Natural killer cell (primary cell): ENCODE measurements at regions of chr5 and their contacts with region 1.

Region 1: GRCh38 chr5:160439205-160439600 is 17.5 kb downstream of the PTTG1 start:
- DNase-seq: peak; percentile 89 to 94
- ATAC-seq: peak; percentile 85 to 91 (median 87)
- H3K4me3 ChIP-seq: peak overlapping the region; percentile 55
- H3K4me3 Mint-ChIP-seq: peak overlapping the region; percentile 92
- H3K27ac ChIP-seq: peak overlapping the region; percentile 52
- H3K27ac Mint-ChIP-seq: peak overlapping the region; percentile 82 to 88
- H3K4me1 ChIP-seq: peaks cover 18% of the 10 kb centered on the region
- H3K4me1 Mint-ChIP-seq: peaks cover 13 to 17% of the 10 kb centered on the region in 2 donors
- H3K27me3 ChIP-seq: no peaks in the 10 kb centered on the region
- H3K27me3 Mint-ChIP-seq: peaks cover 10 to 19% of the 10 kb centered on the region in 2 donors
- CTCF ChIP-seq: peak; percentile 80

Region 2: DNA sequence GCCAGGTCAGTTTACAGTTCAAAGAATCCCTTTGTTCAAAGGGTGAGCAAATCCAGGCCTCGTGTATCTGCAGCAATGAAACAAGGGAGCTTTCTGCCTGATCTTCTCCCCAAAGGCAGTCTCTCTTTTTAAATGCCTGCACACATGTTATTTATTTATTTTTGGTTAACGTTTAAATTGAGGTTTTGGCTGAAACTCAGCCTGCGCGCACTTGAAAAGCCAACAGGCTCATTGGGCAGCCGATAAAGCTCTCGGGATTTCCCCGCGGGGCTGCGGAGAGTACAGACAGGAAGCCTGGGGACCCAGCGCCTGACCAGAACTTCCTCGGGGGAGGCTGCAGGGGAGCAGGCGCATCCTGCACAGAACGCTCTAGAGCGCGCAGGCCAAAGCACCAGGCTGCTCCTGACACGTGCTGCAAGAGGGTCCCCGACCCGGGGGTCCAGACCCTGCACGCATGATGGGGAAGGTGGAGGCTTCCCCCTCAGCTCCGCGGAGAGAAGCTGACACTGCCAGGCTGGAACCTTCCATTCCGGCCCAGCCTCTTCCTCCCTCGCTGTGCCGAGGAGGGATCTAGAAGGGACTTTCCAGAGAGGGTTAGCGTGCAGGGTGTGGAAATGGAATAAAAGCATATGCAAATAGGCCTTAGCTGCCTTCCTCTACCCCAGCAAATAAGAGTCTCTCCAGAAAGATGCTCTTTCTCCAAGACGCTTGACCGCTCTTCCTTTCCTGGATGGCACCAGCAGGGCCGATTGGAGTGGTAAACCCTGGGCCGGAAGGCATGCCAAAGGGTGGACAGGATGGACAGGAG is 28.6 kb after region 1 on chr5:
- intact Hi-C with region 1: loop called (anchors 1 kb)
- DNase-seq: peak; percentile 79 to 89
- ATAC-seq: peak; percentile 84 to 94 (median 93)
- H3K4me3 ChIP-seq: peak overlapping the region; percentile 37
- H3K4me3 Mint-ChIP-seq: peak overlapping the region; percentile 93
- H3K27ac ChIP-seq: peak overlapping the region; percentile 60
- H3K27ac Mint-ChIP-seq: peak overlapping the region; percentile 89 to 92
- H3K4me1 ChIP-seq: peaks cover 41% of the 10 kb centered on the region
- H3K4me1 Mint-ChIP-seq: peaks cover 59 to 63% of the 10 kb centered on the region in 2 donors
- H3K27me3 ChIP-seq: no peaks in the 10 kb centered on the region
- H3K27me3 Mint-ChIP-seq: no peaks in the 10 kb centered on the region
- CTCF ChIP-seq: no peak

Region 3: DNA sequence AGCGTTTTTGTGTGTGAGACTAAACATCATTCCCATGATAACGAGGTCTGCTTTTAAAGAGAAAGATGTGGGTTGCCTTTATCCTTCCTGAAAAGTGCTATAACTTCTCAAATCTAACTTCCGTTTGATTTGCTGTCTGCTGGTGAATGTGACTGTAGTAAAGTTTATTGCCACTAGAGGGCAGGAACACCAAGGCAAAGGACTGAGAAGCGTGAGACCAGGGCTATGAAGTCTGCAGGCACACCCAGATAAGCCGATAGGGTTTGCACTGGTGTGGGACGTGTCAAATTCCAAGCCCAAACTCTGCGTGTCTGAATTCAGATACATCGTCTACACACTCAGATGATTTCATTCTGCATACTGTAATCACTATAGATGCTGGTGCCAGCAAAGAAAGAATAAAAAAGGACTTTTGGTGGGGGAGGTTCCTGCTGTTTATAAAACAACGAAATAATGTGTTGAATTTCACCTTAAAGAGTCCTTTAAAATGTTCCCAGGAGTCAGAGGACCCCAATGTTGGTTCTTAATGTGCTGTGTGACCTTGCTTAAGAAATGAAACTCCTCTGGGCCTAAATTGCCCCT is 69.7 kb after region 1 on chr5:
- intact Hi-C with region 1: loop called (anchors 1 kb)
- DNase-seq: peak in 1 of 2 donors; percentile 93
- ATAC-seq: peak; percentile 81 to 84 (median 84)
- H3K4me3 ChIP-seq: no peak overlapping the region
- H3K4me3 Mint-ChIP-seq: peak overlapping the region; percentile 10
- H3K27ac ChIP-seq: no peak overlapping the region
- H3K27ac Mint-ChIP-seq: peak overlapping the region; percentile 32 to 73
- H3K4me1 ChIP-seq: peaks cover 33% of the 10 kb centered on the region
- H3K4me1 Mint-ChIP-seq: peaks cover 29 to 39% of the 10 kb centered on the region in 2 donors
- H3K27me3 ChIP-seq: no peaks in the 10 kb centered on the region
- H3K27me3 Mint-ChIP-seq: peaks cover 5 to 14% of the 10 kb centered on the region in 2 donors
- CTCF ChIP-seq: peak; percentile 89

Region 4: DNA sequence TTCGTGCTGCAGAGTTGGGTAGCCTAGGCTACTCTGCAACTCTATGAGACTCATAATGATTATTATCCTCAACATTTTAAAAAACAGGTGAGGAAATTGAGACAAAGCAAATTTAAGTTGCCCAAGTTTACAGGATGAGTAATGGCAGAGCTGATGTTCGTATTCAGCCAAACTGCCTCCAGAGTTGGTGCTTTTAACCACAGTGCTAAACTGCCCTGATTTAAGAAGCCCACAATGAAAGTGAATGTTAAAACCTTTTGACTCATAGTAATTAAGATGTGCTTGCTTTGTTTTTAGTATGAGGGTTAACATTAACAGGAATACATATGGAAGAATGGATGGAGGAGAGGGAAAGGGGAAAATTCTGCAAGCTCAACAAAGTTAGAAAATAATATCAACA is 1123.2 kb after region 1 on chr5:
- intact Hi-C with region 1: loop called (anchors 10 kb)
- DNase-seq: no peak
- ATAC-seq: no peak
- H3K4me3 ChIP-seq: no peak overlapping the region
- H3K4me3 Mint-ChIP-seq: no peak overlapping the region
- H3K27ac ChIP-seq: no peak overlapping the region
- H3K27ac Mint-ChIP-seq: no peak overlapping the region
- H3K4me1 ChIP-seq: no peaks in the 10 kb centered on the region
- H3K4me1 Mint-ChIP-seq: no peaks in the 10 kb centered on the region
- H3K27me3 ChIP-seq: no peaks in the 10 kb centered on the region
- H3K27me3 Mint-ChIP-seq: no peaks in the 10 kb centered on the region
- CTCF ChIP-seq: no peak